Dendritic cell treated with granulocyte-macrophage colony-stimulating factor and Interleukin-4, amounts not matched to agents 40 ng/mL and 50 ng/mL, for 4 days (primary cell): ENCODE measurements at regions of chr5 and their contacts with region 1.

Region 1: DNA sequence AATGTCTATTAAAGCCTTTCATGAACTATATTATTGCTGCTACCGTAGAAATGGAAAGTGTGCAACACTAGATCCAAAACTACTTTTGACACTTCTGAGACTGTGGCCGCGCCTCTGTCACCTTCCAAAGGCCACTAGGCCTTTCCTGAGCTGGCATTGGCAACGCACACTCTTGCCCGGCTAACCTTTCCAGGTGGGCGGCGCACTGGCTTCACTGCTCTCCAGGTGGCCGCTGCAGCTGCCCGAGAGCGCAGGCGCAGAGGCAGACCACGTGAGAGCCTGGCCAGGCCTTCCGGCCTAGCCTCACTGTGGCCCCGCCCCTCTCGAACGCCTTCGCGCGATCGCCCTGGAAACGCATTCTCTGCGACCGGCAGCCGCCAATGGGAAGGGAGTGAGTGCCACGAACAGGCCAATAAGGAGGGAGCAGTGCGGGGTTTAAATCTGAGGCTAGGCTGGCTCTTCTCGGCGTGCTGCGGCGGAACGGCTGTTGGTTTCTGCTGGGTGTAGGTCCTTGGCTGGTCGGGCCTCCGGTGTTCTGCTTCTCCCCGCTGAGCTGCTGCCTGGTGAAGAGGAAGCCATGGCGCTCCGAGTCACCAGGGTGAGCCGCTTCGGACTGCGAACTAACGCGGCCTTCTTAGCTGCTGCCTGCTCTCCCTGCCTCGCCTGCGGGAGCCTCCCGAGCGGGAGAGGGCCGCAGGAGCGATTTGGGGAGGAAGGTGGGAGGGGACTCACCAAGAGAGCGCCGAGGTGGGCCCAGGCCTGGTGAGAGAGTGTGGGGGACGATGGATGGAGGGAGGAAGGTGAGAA is at the start of gene CCNB1:
- H3K4me3 Mint-ChIP-seq: peak within 1 kb of the TSS; percentile 92
- H3K27ac Mint-ChIP-seq: peak within 1 kb of the TSS; percentile 85
- H3K4me1 Mint-ChIP-seq: peaks cover 31% of the 10 kb centered on the region
- H3K27me3 Mint-ChIP-seq: no peaks in the 10 kb centered on the region

Region 2: DNA sequence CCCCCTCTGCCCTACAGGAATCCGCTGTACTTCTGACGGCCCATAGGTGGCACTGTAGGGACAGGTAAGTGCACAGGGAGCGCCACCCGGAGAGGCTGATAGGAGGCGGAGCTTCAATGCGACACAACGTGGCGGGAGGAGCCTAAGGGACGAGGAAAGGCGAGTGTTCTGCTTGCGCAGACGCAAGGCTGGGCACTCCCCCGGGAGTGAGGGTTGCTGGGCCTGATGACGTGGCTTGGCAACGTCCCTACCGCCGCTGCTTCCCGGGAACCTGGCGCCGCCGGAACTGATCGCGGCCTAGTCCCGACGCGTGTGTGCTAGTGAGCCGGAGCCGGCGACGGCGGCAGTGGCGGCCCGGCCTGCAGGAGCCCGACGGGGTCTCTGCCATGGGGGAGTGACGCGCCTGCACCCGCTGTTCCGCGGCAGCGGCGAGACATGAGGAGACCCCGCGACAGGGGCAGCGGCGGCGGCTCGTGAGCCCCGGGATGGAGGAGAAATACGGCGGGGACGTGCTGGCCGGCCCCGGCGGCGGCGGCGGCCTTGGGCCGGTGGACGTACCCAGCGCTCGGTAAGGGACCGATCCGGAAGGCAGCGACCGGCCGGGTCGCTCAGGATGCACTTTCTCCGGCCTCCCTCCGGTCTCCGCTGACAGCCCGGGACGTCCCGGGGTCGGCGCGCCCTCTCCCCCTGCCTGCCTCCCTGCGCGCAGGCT is 73.0 kb before region 1 on chr5 and contains the start of gene SLC30A5:
- intact Hi-C with region 1: loop called (anchors 2 kb)
- H3K4me3 Mint-ChIP-seq: peak within 1 kb of the TSS; percentile 91
- H3K27ac Mint-ChIP-seq: peak within 1 kb of the TSS; percentile 95
- H3K4me1 Mint-ChIP-seq: peaks cover 33% of the 10 kb centered on the region
- H3K27me3 Mint-ChIP-seq: no peaks in the 10 kb centered on the region

Region 3: GRCh38 chr5:69105996-69106906 is 60.6 kb before region 1 on chr5:
- intact Hi-C with region 1: loop called (anchors 5 kb)
- H3K4me3 Mint-ChIP-seq: no peak overlapping the region
- H3K27ac Mint-ChIP-seq: peak overlapping the region; percentile 77
- H3K4me1 Mint-ChIP-seq: peaks cover 12% of the 10 kb centered on the region
- H3K27me3 Mint-ChIP-seq: no peaks in the 10 kb centered on the region

Region 4: GRCh38 chr5:69189162-69190086 is 22.5 kb after region 1 on chr5 and contains the start of gene CENPH:
- intact Hi-C with region 1: loop called (anchors 1 kb)
- H3K4me3 Mint-ChIP-seq: peak within 1 kb of the TSS; percentile 91
- H3K27ac Mint-ChIP-seq: peak within 1 kb of the TSS; percentile 92
- H3K4me1 Mint-ChIP-seq: peaks cover 9% of the 10 kb centered on the region
- H3K27me3 Mint-ChIP-seq: no peaks in the 10 kb centered on the region

Region 5: GRCh38 chr5:69217548-69218526 is 50.9 kb after region 1 on chr5:
- intact Hi-C with region 1: loop called (anchors 1 kb)
- H3K4me3 Mint-ChIP-seq: peak overlapping the region; percentile 100
- H3K27ac Mint-ChIP-seq: peak overlapping the region; percentile 100
- H3K4me1 Mint-ChIP-seq: peaks cover 5% of the 10 kb centered on the region
- H3K27me3 Mint-ChIP-seq: no peaks in the 10 kb centered on the region

Region 6: DNA sequence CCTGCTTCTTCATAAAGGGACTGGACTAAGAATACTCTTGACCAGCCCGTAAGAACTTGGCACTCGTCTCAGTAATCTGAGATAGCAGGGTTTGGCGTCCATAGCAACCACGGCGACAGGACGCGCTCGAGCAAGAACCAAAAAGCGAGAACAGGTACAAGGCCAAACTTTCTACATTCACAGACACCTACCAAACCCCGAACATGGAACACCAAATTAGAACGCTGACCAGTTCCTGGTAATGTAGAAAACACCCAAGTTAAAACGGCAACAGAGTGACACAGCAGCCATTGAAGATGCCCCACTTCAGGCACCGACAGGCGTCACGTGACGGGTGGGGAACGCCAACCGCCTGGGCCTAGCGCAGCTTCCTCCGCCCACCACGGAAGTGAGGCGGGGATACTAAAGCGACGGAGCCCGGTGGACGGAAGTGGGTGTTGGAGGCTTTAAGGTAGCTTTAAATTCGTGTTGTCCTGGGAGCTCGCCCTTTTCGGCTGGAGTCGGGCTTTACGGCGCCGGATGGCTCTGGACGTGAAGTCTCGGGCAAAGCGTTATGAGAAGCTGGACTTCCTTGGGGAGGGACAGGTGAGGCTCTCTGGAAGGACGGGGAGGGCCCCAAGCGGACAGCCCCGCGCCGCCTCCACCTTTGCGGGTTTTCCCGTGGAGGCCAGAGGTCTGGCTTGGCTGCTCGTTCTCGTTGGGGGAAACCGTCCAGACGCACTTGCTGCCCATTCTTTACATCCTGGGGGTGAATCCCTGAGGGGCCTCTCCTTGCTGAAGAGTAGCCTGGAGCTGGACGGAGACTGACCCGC is 67.8 kb after region 1 on chr5 and contains the start of gene CDK7:
- intact Hi-C with region 1: loop called (anchors 2 kb)
- H3K4me3 Mint-ChIP-seq: peak within 1 kb of the TSS; percentile 91
- H3K27ac Mint-ChIP-seq: peak within 1 kb of the TSS; percentile 88
- H3K4me1 Mint-ChIP-seq: peaks cover 32% of the 10 kb centered on the region
- H3K27me3 Mint-ChIP-seq: no peaks in the 10 kb centered on the region